Activated CD8-positive, alpha-beta T cell treated with anti-CD3 and anti-CD28 coated beads, Interleukin-2, amount 10 ng/mL, durations not matched to agents 7 days and 5 days (primary cell): ENCODE measurements at regions of chr2 and their contacts with region 1.

Region 1: DNA sequence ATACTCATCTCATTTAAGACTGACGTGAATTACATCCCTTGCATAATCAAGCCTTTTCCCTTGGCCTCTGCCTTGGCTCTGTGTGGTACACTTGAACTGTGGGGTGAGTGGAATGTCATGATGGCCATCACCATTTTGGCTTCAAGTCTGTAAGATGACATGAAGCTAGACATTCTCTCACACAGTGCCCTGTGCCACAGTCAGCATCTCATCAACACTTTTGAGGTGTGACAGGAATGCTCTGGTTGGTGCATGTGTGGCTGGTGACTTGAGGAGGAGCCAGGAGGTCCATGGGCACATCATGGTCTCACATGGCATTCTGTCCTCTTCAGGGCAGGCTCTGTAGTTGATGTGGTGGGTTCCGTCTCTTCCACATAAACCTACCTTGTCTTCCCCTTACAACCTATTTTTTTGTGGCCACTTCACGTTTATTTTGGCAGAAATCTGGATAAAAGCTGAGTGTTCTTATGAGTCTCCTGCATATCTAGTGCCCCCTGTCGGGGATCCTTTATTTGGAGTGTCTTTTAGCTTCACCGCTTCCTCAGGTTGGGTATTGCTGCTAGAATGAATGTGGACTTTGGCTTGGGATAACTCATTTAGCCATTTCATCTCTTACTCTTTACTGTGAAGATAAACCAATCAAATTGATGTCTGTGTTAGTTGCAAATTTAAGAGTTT is 28.1 kb downstream of the MAP4K4 start:
- DNase-seq: no peak
- ATAC-seq: no peak
- H3K4me3 Mint-ChIP-seq: no peak overlapping the region
- H3K27ac Mint-ChIP-seq: no peak overlapping the region
- H3K4me1 Mint-ChIP-seq: peaks cover 76% of the 10 kb centered on the region
- H3K27me3 Mint-ChIP-seq: no peaks in the 10 kb centered on the region

Region 2: DNA sequence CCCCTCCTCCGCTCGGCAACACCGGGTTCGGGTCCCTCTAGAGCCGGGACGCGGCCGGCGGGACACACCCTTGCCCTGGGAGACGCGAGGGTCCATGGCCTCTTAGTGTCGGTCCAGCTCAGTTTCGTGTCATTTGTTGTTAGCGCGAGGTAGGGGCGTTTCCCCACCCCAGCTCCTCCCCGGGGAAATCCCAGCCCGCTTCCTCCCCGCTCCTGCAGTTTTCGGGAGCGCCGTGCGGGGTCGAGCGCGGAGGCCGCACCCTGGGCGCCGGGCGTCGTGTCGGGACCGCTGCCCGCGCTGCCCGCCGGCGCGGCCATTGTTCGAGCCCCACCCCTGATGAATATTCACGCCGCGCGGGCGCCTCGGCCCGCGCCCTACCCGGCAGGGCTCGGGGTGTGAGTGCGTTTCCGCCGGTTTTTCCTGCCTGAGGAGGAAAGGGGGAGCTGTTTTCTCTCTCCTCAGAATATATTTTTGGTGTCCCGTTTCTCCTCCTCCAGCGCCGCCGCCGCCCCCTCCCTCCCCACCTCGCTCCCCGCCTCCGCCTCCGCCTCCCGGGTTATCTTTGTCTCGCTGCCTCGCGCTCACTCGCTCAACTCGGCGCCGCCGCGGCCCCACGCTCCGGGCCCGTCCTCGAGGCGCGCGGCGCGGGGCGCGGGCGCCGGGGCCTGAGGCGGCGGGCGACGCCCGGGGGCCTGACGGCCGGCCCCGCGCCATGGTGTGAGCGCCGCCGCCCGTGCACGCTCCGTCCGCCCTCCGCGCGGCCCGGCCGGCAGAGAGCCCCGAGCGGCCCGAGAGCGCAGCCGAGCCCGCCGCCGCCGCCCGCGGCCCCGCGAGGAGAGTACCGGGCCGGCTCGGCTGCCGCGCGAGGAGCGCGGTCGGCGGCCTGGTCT is 28.3 kb before region 1 on chr2 and contains the start of gene MAP4K4:
- CTCF ChIA-PET with region 1: interaction called, 15 read pairs
- POLR2A ChIA-PET with region 1: interaction called, 12 read pairs
- DNase-seq: peak; percentile 84
- ATAC-seq: peak; percentile 73
- H3K4me3 Mint-ChIP-seq: peak within 1 kb of the TSS; percentile 86
- H3K27ac Mint-ChIP-seq: peak within 1 kb of the TSS; percentile 89
- H3K4me1 Mint-ChIP-seq: peaks cover 28% of the 10 kb centered on the region
- H3K27me3 Mint-ChIP-seq: peaks cover 12% of the 10 kb centered on the region
- total RNA-seq, gene MAP4K4: 90.2 to 92.2 TPM

Region 3: DNA sequence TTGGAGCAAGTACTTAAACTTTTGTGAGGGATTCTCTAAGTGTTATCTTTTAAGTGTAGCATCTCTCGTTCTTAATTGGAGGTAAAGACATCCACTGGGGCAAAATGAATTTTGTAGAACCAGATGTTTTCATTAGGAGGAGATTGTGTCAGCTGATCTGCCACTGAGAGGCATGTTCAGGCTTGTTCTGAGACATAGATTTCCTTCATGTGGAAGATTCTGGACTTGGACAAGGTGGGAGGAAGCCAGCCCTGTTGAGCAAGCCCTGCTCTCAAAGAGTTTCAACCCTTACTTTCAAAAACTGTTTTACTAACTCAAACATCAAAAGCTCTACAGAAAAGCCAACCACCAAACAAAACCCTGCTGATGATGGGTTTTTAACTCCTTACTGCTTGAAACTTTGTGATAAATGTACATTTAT is 21.6 kb before region 1 on chr2:
- CTCF ChIA-PET with region 1: interaction called, 15 read pairs
- POLR2A ChIA-PET with region 1: no interaction called
- DNase-seq: peak; percentile 46
- ATAC-seq: peak; percentile 45
- H3K4me3 Mint-ChIP-seq: peak overlapping the region; percentile 67
- H3K27ac Mint-ChIP-seq: peak overlapping the region; percentile 92
- H3K4me1 Mint-ChIP-seq: peaks cover 77% of the 10 kb centered on the region
- H3K27me3 Mint-ChIP-seq: no peaks in the 10 kb centered on the region

Region 4: DNA sequence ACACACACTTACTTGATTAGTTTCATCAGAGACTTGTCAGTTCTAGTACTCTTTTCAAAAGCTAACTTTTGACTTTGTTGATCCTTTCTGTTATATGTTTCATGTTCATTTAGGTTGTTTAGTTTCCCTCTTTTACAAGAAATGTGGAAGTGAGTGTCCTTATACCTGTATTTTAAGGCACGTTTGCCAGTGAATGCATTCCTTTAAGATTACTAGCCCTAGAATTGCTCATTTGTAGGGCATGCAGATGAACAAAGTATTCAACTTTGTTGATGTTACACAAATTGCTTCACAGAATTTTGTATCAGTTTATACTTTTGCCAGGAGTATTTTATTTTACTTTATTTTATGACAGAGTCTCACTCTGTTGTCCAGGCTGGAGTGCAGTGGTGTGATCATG is 467.4 kb after region 1 on chr2:
- CTCF ChIA-PET with region 1: no interaction called
- POLR2A ChIA-PET with region 1: no interaction called
- DNase-seq: no peak
- ATAC-seq: no peak
- H3K4me3 Mint-ChIP-seq: no peak overlapping the region
- H3K27ac Mint-ChIP-seq: no peak overlapping the region
- H3K4me1 Mint-ChIP-seq: peaks cover 12% of the 10 kb centered on the region
- H3K27me3 Mint-ChIP-seq: peaks cover 16% of the 10 kb centered on the region